CD8-positive, alpha-beta T cell (primary cell): ENCODE measurements at regions of chr14 and their contacts with region 1.

Region 1: GRCh38 chr14:22519877-22520685 is 68.9 kb downstream of the DAD1 start:
- DNase-seq: peak in 2 of 9 experiments; percentile 37 to 57
- ATAC-seq: peak; percentile 21
- H3K4me3 ChIP-seq: peak overlapping the region; percentile 47 to 61
- H3K4me3 Mint-ChIP-seq: peak overlapping the region; percentile 86
- H3K27ac ChIP-seq: peak overlapping the region; percentile 58 to 86
- H3K27ac Mint-ChIP-seq: peak overlapping the region; percentile 99
- H3K4me1 ChIP-seq: peaks cover 94% of the 10 kb centered on the region
- H3K4me1 Mint-ChIP-seq: peaks cover 93% of the 10 kb centered on the region
- H3K27me3 ChIP-seq: no peaks in the 10 kb centered on the region
- H3K27me3 Mint-ChIP-seq: no peaks in the 10 kb centered on the region
- CTCF ChIP-seq: no peak

Region 2: DNA sequence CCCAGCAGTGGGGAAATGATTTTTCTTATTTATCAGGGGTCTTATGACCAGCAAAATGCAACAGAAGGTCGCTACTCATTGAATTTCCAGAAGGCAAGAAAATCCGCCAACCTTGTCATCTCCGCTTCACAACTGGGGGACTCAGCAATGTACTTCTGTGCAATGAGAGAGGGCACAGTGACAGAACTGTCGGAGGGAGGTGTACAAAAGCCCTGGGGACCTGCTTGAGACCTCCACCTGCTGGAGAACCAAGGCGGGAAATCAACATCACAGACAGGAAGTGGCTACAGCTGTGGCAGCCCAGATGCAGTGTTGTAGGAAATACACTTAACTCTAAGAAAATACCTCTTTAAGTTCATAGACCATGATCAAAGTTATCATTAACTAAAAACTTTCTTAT is 595.6 kb before region 1 on chr14:
- CTCF ChIA-PET with region 1: no interaction called
- POLR2A ChIA-PET with region 1: no interaction called
- intact Hi-C with region 1: loop called in 1 of 2 experiments (anchors 5 kb)
- DNase-seq: peak; percentile 31 to 88 (median 69)
- ATAC-seq: peak; percentile 83
- H3K4me3 ChIP-seq: peak overlapping the region; percentile 16 to 33
- H3K4me3 Mint-ChIP-seq: peak overlapping the region; percentile 74
- H3K27ac ChIP-seq: peak overlapping the region; percentile 22 to 48
- H3K27ac Mint-ChIP-seq: peak overlapping the region; percentile 91
- H3K4me1 ChIP-seq: peaks cover 46% of the 10 kb centered on the region
- H3K4me1 Mint-ChIP-seq: peaks cover 58% of the 10 kb centered on the region
- H3K27me3 ChIP-seq: no peaks in the 10 kb centered on the region
- H3K27me3 Mint-ChIP-seq: no peaks in the 10 kb centered on the region
- CTCF ChIP-seq: peak; percentile 38

Region 3: DNA sequence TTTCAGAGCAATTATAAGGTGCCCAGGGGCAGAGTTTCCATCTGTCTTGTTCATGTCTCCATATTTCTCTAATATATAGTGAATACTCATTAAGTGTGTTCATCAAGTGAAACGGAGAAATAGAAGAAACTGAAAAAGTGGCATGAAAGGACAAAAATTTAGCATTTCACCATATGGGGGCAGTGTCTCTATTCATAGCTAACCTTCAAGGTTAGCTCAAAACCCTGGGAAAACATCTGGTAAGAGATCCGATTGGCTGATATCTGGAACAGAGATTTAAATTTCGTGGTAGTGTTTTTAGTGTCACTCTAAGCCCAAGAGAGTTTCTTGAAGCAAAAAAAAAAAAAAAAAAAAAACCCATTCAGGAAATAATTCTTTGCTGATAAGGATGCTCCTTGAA is 298.6 kb before region 1 on chr14:
- CTCF ChIA-PET with region 1: no interaction called
- POLR2A ChIA-PET with region 1: no interaction called
- intact Hi-C with region 1: loop called in 1 of 2 experiments (anchors 10 kb)
- DNase-seq: peak in 2 of 9 experiments; percentile 21 to 51
- ATAC-seq: no peak
- H3K4me3 ChIP-seq: peak overlapping the region in 1 of 2 experiments; percentile 8
- H3K4me3 Mint-ChIP-seq: peak overlapping the region; percentile 50
- H3K27ac ChIP-seq: no peak overlapping the region
- H3K27ac Mint-ChIP-seq: no peak overlapping the region
- H3K4me1 ChIP-seq: peaks cover 4% of the 10 kb centered on the region
- H3K4me1 Mint-ChIP-seq: peaks cover 12% of the 10 kb centered on the region
- H3K27me3 ChIP-seq: no peaks in the 10 kb centered on the region
- H3K27me3 Mint-ChIP-seq: no peaks in the 10 kb centered on the region
- CTCF ChIP-seq: no peak

Region 4: DNA sequence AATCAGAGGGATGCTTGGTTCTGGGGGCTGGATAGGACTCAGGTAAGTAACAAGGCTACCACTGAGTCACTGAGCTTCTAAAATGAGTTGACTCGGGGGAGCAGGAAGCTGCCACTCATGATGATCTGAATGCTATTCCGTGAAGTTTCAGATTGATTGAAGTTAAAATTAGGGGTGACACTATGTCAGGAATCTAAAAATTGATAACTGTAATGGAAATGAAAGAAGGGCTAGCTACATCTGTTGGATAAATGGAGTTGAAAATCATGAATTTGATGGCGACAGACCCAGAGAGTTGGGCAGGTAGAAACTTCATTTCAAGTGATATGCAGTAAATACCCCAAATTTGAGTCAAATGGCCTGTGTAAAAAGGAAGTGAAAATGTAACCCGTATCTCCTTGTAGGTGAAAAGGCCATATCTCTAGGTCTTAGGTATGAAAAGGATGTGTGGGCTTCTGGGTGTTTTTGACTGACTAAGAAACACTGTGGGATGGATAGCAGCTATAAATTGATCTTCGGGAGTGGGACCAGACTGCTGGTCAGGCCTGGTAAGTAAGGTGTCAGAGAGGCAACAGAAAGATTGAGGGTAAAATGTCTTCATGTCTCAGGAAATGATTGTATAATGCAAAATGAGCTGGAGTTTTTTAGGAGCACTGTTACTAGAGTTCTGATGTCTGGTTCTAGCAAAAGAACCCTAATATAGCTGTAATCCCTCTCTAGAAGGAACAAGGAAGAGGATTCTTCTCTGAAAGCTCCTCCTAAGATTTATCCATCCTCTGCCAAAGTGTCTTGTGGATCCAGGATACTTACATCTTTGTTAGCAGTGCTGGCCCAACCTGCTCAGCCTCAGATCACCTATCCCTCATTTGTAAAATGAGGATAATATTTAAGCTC is 11.6 kb after region 1 on chr14:
- CTCF ChIA-PET with region 1: interaction called, 47 read pairs
- POLR2A ChIA-PET with region 1: interaction called, 274 read pairs
- intact Hi-C with region 1: loop called in 1 of 2 experiments (anchors 1 kb)
- DNase-seq: peak in 2 of 9 experiments; percentile 44 to 70
- ATAC-seq: peak; percentile 62
- H3K4me3 ChIP-seq: peak overlapping the region; percentile 38 to 43
- H3K4me3 Mint-ChIP-seq: peak overlapping the region; percentile 81
- H3K27ac ChIP-seq: peak overlapping the region; percentile 54 to 83
- H3K27ac Mint-ChIP-seq: peak overlapping the region; percentile 97
- H3K4me1 ChIP-seq: peaks cover 94% of the 10 kb centered on the region
- H3K4me1 Mint-ChIP-seq: peaks cover 90% of the 10 kb centered on the region
- H3K27me3 ChIP-seq: no peaks in the 10 kb centered on the region
- H3K27me3 Mint-ChIP-seq: no peaks in the 10 kb centered on the region
- CTCF ChIP-seq: no peak

Region 5: DNA sequence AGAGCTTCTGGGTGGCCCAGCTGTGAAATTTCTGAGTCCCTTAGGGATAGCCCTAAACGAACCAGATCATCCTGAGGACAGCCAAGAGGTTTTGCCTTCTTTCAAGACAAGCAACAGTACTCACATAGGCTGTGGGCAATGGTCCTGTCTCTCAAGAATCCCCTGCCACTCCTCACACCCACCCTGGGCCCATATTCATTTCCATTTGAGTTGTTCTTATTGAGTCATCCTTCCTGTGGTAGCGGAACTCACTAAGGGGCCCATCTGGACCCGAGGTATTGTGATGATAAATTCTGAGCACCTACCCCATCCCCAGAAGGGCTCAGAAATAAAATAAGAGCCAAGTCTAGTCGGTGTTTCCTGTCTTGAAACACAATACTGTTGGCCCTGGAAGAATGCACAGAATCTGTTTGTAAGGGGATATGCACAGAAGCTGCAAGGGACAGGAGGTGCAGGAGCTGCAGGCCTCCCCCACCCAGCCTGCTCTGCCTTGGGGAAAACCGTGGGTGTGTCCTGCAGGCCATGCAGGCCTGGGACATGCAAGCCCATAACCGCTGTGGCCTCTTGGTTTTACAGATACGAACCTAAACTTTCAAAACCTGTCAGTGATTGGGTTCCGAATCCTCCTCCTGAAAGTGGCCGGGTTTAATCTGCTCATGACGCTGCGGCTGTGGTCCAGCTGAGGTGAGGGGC is 30.0 kb after region 1 on chr14:
- CTCF ChIA-PET with region 1: interaction called, 225 read pairs
- POLR2A ChIA-PET with region 1: interaction called, 472 read pairs
- intact Hi-C with region 1: loop called (anchors 2 to 5 kb)
- DNase-seq: peak in 7 of 9 experiments; percentile 53 to 86 (median 78)
- ATAC-seq: peak; percentile 63
- H3K4me3 ChIP-seq: peak overlapping the region; percentile 2 to 14
- H3K4me3 Mint-ChIP-seq: peak overlapping the region; percentile 79
- H3K27ac ChIP-seq: peak overlapping the region; percentile 55 to 97
- H3K27ac Mint-ChIP-seq: peak overlapping the region; percentile 93
- H3K4me1 ChIP-seq: peaks cover 96% of the 10 kb centered on the region
- H3K4me1 Mint-ChIP-seq: peaks cover 94% of the 10 kb centered on the region
- H3K27me3 ChIP-seq: no peaks in the 10 kb centered on the region
- H3K27me3 Mint-ChIP-seq: no peaks in the 10 kb centered on the region
- CTCF ChIP-seq: no peak

Region 6: DNA sequence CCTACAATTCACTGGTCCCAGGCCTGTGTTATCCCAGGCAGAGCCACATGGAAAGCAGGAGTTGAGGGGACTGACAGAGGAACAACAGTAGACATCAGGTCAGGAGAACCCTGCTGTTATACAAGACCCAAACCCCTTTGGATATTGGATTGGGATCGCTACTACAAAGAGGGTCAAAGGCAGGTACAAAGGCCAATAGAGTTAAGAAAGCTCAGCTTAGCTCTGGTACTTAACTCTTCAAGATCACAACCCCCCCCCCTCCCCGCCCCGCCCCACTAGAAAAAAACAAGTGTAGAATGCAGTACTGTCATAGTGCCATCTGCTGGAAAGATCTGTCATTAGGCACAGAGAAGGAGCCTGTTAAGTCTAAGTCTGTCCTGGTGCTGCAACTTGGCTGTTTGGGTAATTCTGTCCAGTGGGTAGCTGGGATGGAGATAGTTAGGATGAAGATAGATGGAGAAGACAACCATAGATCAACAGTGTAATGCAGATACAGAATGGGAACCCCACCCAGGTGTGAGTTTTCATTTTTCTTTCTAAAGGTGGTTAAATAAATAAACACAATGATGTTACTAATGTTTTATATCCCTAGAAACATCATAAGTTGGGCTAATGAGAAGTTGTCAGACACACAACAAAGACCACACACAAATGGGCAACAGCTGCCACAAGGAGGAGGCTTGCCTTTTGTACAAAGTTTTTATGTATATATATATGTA is 380.2 kb after region 1 on chr14:
- CTCF ChIA-PET with region 1: no interaction called
- POLR2A ChIA-PET with region 1: no interaction called
- intact Hi-C with region 1: no loop called
- DNase-seq: peak in 5 of 9 experiments; percentile 33 to 82 (median 48)
- ATAC-seq: peak; percentile 86
- H3K4me3 ChIP-seq: no peak overlapping the region
- H3K4me3 Mint-ChIP-seq: no peak overlapping the region
- H3K27ac ChIP-seq: no peak overlapping the region
- H3K27ac Mint-ChIP-seq: no peak overlapping the region
- H3K4me1 ChIP-seq: peaks cover 3% of the 10 kb centered on the region
- H3K4me1 Mint-ChIP-seq: peaks cover 6% of the 10 kb centered on the region
- H3K27me3 ChIP-seq: no peaks in the 10 kb centered on the region
- H3K27me3 Mint-ChIP-seq: no peaks in the 10 kb centered on the region
- CTCF ChIP-seq: peak; percentile 60